CD8-positive, alpha-beta memory T cell (primary cell): ENCODE measurements at regions of chr18 and their contacts with region 1.

Region 1: DNA sequence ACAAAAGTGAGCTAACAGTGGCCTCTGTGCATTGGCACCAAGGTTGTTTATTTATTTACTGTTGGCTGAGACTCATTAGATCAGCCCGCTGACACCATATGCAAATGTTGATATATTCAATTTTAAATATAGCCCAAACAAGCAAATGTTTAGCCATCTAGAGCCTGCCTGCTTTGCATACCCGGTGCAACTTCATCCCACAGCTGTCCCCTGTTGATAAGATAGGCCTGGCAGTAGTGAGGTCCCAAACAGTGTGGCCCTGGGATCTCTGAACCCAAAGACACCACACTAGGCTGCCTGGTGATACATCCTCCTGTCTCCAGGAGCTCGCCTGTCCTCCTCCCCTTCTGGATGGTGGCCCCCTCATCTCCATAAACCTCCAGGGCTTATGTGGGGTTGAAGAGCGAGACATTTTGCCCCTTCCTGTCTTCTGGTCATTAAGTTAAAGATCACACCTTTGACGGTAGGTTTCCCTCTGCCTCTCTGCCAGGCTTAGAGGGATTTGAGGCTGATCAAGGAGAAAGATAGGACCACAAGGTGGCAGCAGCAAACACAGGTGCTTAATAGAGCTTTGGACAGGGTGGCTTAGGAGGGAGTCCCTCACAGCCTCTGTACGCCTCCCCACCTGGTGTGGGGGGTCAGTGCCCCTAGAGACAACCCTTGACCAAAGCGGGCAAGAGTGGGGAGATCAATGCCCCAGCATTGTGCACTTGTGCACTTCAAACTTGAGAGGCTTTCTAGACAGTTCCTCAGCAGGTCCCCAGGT is 23.7 kb upstream of the MYO5B start:
- DNase-seq: peak in 3 of 5 donors; percentile 11 to 17 (median 16)
- H3K4me3 ChIP-seq: no peak overlapping the region
- H3K4me3 Mint-ChIP-seq: no peak overlapping the region
- H3K27ac ChIP-seq: no peak overlapping the region
- H3K27ac Mint-ChIP-seq: no peak overlapping the region
- H3K4me1 ChIP-seq: no peaks in the 10 kb centered on the region
- H3K4me1 Mint-ChIP-seq: no peaks in the 10 kb centered on the region
- H3K27me3 ChIP-seq: no peaks in the 10 kb centered on the region
- H3K27me3 Mint-ChIP-seq: peaks cover 25 to 57% of the 10 kb centered on the region in 2 donors

Region 2: GRCh38 chr18:50143295-50143694 is 75.3 kb before region 1 on chr18:
- CTCF ChIA-PET with region 1: no interaction called
- POLR2A ChIA-PET with region 1: no interaction called
- DNase-seq: no peak
- H3K4me3 ChIP-seq: no peak overlapping the region
- H3K4me3 Mint-ChIP-seq: no peak overlapping the region
- H3K27ac ChIP-seq: no peak overlapping the region
- H3K27ac Mint-ChIP-seq: no peak overlapping the region
- H3K4me1 ChIP-seq: no peaks in the 10 kb centered on the region
- H3K4me1 Mint-ChIP-seq: no peaks in the 10 kb centered on the region
- H3K27me3 ChIP-seq: no peaks in the 10 kb centered on the region
- H3K27me3 Mint-ChIP-seq: peaks cover 21 to 65% of the 10 kb centered on the region in 2 donors

Region 3: GRCh38 chr18:50207722-50208121 is 10.9 kb before region 1 on chr18:
- CTCF ChIA-PET with region 1: interaction called, 10 read pairs
- POLR2A ChIA-PET with region 1: no interaction called
- DNase-seq: no peak
- H3K4me3 ChIP-seq: no peak overlapping the region
- H3K4me3 Mint-ChIP-seq: no peak overlapping the region
- H3K27ac ChIP-seq: no peak overlapping the region
- H3K27ac Mint-ChIP-seq: no peak overlapping the region
- H3K4me1 ChIP-seq: peaks cover 4% of the 10 kb centered on the region
- H3K4me1 Mint-ChIP-seq: peaks cover 5 to 11% (median 9%) of the 10 kb centered on the region in 3 donors
- H3K27me3 ChIP-seq: peaks cover 7% of the 10 kb centered on the region
- H3K27me3 Mint-ChIP-seq: peaks cover 34 to 66% of the 10 kb centered on the region in 2 donors

Region 4: GRCh38 chr18:50280707-50281294 is 62.2 kb after region 1 on chr18:
- CTCF ChIA-PET with region 1: no interaction called
- POLR2A ChIA-PET with region 1: no interaction called
- DNase-seq: no peak
- H3K4me3 ChIP-seq: peak overlapping the region; percentile 90
- H3K4me3 Mint-ChIP-seq: peak overlapping the region; percentile 95 to 98 (median 97)
- H3K27ac ChIP-seq: peak overlapping the region; percentile 86
- H3K27ac Mint-ChIP-seq: peak overlapping the region; percentile 89 to 100 (median 98)
- H3K4me1 ChIP-seq: peaks cover 30% of the 10 kb centered on the region
- H3K4me1 Mint-ChIP-seq: peaks cover 33 to 50% (median 37%) of the 10 kb centered on the region in 3 donors
- H3K27me3 ChIP-seq: no peaks in the 10 kb centered on the region
- H3K27me3 Mint-ChIP-seq: peaks cover 0 to 1% of the 10 kb centered on the region in 2 donors